A673 (cell line): ENCODE measurements at regions of chr7 and their contacts with region 1.

Region 1: DNA sequence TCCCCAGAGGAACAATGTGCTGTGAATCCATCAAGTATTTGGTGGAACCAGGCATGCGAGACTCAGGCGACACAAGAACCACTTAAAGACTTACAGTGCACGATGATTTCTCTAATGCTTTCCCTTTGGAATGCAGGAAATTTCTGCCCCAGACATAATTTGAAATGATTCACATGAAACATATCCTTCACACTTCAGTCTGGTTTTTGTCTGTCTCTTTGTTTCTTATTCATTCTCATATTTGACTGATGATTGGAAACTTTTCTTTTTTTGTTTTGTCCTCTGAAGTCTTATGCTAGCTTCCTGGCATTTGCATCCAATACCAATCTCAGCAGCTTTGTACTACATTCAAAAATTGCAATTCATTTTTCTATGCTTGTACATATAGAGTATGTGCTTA is 502.8 kb downstream of the PHTF2 start:
- DNase-seq: no peak
- H3K4me3 ChIP-seq: no peak overlapping the region
- H3K27ac ChIP-seq: no peak overlapping the region
- H3K4me1 ChIP-seq: no peaks in the 10 kb centered on the region
- H3K27me3 ChIP-seq: peaks cover 7% of the 10 kb centered on the region
- CTCF ChIP-seq: no peak

Region 2: GRCh38 chr7:78254726-78255055 is 46.7 kb before region 1 on chr7:
- CTCF ChIA-PET with region 1: no interaction called
- POLR2A ChIA-PET with region 1: no interaction called
- intact Hi-C with region 1: loop called (anchors 5 kb)
- DNase-seq: no peak
- H3K4me3 ChIP-seq: no peak overlapping the region
- H3K27ac ChIP-seq: no peak overlapping the region
- H3K4me1 ChIP-seq: no peaks in the 10 kb centered on the region
- H3K27me3 ChIP-seq: peaks cover 6% of the 10 kb centered on the region
- CTCF ChIP-seq: no peak

Region 3: DNA sequence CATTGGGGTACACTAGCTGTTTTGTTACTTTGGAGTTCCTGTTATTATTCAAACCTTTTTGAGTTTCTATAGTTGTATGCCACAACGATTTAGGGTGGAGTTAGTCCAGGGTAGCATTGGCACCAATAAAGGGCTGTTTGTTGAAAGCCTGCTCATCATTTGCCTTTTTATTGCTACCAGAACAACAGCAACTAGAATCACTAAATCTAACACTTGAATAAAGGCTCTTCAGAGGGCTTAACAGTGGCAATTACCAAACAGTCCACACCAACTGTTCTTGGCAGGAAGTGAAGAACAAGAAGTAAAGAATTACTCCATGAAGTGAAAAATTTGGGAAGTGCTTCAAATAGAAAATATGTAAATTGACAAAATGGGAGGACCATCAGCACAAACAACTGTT is 118.6 kb after region 1 on chr7:
- CTCF ChIA-PET with region 1: no interaction called
- POLR2A ChIA-PET with region 1: no interaction called
- intact Hi-C with region 1: no loop called
- DNase-seq: no peak
- H3K4me3 ChIP-seq: no peak overlapping the region
- H3K27ac ChIP-seq: no peak overlapping the region
- H3K4me1 ChIP-seq: no peaks in the 10 kb centered on the region
- H3K27me3 ChIP-seq: no peaks in the 10 kb centered on the region
- CTCF ChIP-seq: no peak